WTC11 (cell line): ENCODE measurements at regions of chr18 and their contacts with region 1.

Region 1: GRCh38 chr18:46281185-46282176 is 177.3 kb downstream of the HAUS1 start:
- DNase-seq: peak; percentile 84
- ATAC-seq: peak; percentile 83
- H3K4me3 Mint-ChIP-seq: no peak overlapping the region
- H3K27ac Mint-ChIP-seq: no peak overlapping the region
- H3K4me1 Mint-ChIP-seq: peaks cover 30% of the 10 kb centered on the region
- H3K27me3 Mint-ChIP-seq: no peaks in the 10 kb centered on the region; the same call in 1 of the 2 replicates
- CTCF ChIP-seq: peak; percentile 83

Region 2: DNA sequence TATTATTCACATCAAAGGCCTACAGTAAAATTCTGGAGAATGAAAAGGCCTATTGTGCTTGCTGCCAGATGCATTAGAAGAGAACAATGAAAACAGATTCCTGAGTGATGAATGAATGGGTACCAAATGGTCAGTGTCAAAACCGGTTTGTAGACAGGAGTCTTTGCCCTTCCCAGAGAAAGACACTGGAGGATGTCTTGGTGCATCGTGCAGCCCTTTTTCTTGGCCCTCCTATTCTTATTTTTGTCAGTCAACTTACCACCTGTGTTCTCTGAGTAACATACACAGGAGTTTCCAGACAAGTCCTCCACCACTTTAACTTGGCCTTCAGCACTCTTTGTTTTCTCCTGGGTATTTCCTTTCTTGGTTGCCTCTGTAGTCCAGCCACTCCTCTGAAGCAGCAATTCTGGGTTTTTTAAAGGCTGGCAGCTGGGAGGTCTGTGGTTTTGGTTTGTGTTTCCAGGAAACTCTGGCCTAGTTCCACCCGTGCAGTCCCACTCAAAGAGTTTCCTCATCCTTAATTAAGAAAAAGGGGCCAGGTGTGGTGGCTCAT is 238.8 kb before region 1 on chr18:
- CTCF ChIA-PET with region 1: no interaction called
- POLR2A ChIA-PET with region 1: no interaction called
- DNase-seq: no peak
- ATAC-seq: no peak
- H3K4me3 Mint-ChIP-seq: no peak overlapping the region
- H3K27ac Mint-ChIP-seq: no peak overlapping the region
- H3K4me1 Mint-ChIP-seq: peaks cover 11% of the 10 kb centered on the region
- H3K27me3 Mint-ChIP-seq: no peaks in the 10 kb centered on the region
- CTCF ChIP-seq: no peak

Region 3: DNA sequence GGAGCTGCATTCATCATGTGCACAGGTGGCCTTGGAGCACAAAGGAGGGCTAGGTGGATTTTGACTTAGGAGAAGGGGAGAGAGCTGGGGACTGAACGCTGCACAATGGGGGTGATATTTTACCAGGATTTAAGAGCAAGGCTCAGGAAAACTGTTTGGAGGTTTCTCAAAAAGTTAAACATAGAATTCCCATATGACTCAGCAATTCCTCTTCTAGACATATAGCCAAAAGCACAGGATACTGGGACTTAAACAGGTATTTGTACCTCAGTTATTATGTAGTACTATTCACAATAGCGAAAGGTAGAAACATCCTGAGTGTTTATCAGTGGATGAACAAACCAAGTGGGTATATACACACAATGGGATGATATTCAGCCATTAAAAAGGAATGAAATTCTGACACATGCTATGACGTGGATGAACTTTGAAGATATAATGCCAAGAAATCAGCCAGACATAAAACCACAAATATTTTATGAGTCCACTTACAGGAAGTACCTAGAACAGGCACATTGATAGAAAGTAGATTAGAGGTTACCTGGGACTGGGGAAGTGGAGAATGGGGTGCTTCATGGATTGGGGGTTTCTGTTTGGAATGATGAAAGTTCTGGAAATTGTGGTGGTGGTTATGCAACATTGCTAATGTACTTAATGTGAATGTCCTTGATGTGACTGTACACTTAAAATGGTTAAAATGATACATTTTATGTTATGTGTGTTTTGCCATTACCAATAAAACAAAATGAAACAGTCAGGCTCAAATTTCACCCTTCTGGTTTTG is 39.6 kb after region 1 on chr18:
- CTCF ChIA-PET with region 1: interaction called, 12 read pairs
- POLR2A ChIA-PET with region 1: no interaction called
- DNase-seq: no peak
- ATAC-seq: no peak
- H3K4me3 Mint-ChIP-seq: no peak overlapping the region
- H3K27ac Mint-ChIP-seq: no peak overlapping the region; the same call in 1 of the 2 replicates
- H3K4me1 Mint-ChIP-seq: peaks cover 35% of the 10 kb centered on the region
- H3K27me3 Mint-ChIP-seq: no peaks in the 10 kb centered on the region; the same call in 1 of the 2 replicates
- CTCF ChIP-seq: no peak

Region 4: GRCh38 chr18:46343931-46344372 is 62.5 kb after region 1 on chr18:
- CTCF ChIA-PET with region 1: interaction called, 34 read pairs
- POLR2A ChIA-PET with region 1: no interaction called
- DNase-seq: peak; percentile 52
- ATAC-seq: peak; percentile 84
- H3K4me3 Mint-ChIP-seq: no peak overlapping the region
- H3K27ac Mint-ChIP-seq: peak overlapping the region; percentile 53; the same call in 1 of the 2 replicates
- H3K4me1 Mint-ChIP-seq: peaks cover 44% of the 10 kb centered on the region
- H3K27me3 Mint-ChIP-seq: no peaks in the 10 kb centered on the region
- CTCF ChIP-seq: no peak

Region 5: GRCh38 chr18:46386788-46387187 is 105.3 kb after region 1 on chr18:
- CTCF ChIA-PET with region 1: interaction called, 36 read pairs
- POLR2A ChIA-PET with region 1: no interaction called
- DNase-seq: no peak
- ATAC-seq: no peak
- H3K4me3 Mint-ChIP-seq: no peak overlapping the region
- H3K27ac Mint-ChIP-seq: no peak overlapping the region
- H3K4me1 Mint-ChIP-seq: peaks cover 6% of the 10 kb centered on the region; the same call in 1 of the 2 replicates
- H3K27me3 Mint-ChIP-seq: no peaks in the 10 kb centered on the region
- CTCF ChIP-seq: no peak

Region 6: GRCh38 chr18:46445914-46446313 is 164.4 kb after region 1 on chr18:
- CTCF ChIA-PET with region 1: interaction called, 10 read pairs
- POLR2A ChIA-PET with region 1: interaction called, 3 read pairs
- DNase-seq: no peak
- ATAC-seq: no peak
- H3K4me3 Mint-ChIP-seq: no peak overlapping the region
- H3K27ac Mint-ChIP-seq: no peak overlapping the region
- H3K4me1 Mint-ChIP-seq: peaks cover 33% of the 10 kb centered on the region
- H3K27me3 Mint-ChIP-seq: peaks cover 12% of the 10 kb centered on the region
- CTCF ChIP-seq: no peak

Region 7: DNA sequence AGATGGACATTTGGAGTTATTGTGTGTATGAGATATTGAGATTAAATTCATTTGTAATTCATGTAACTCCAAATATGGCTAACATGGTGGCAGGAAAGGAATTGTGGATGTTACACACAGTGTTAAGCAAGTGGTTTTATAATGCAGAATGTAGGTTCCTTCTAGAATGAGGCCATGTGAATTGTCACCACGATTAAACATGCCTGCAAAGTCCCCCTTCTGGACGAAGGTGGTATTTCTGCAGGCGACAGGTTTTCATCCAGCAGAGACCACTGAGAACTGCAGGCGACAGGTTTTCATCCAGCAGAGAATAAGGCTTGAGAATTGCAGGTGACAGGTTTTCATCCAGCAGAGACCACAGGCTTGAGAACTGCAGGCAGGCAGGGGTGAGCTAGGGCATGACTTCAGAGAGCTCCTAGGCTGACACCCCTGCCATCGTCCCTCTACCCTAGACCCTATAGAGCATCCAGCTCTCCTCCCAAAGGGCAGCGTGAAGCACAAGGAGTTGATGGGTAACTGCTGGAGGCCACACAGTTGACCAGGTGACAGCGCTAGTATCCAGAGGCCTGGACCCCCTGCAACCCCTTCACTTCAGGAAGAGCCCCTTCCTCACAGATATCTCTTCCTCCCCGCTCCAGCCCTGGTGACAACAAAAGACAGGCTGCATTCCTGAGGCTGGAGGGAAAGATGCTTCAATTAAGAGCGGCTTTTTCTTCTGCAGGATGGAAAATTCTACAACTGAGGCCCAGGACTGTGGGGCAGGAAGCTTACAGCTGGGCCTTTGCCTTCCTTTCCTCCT is 199.8 kb after region 1 on chr18:
- CTCF ChIA-PET with region 1: interaction called, 11 read pairs
- POLR2A ChIA-PET with region 1: no interaction called
- DNase-seq: peak; percentile 80
- ATAC-seq: peak; percentile 79
- H3K4me3 Mint-ChIP-seq: no peak overlapping the region
- H3K27ac Mint-ChIP-seq: no peak overlapping the region
- H3K4me1 Mint-ChIP-seq: peaks cover 14% of the 10 kb centered on the region
- H3K27me3 Mint-ChIP-seq: 0 out of 2 replicates have a peak, but pooled peaks cover 3% of the 10 kb centered on the region
- CTCF ChIP-seq: peak; percentile 88